ENCODE measurements at regions of chr5 and their contacts with region 1.

Region 1: GRCh38 chr5:73437101-73437776 is 11.3 kb downstream of the FOXD1 start:
- DNase-seq: no peak
- ATAC-seq: peak; percentile 8
- H3K4me3 ChIP-seq: no peak overlapping the region
- H3K4me3 Mint-ChIP-seq: peak overlapping the region in 7 of 10 donors; percentile 49 to 74 (median 66)
- H3K27ac ChIP-seq: no peak overlapping the region
- H3K27ac Mint-ChIP-seq: peak overlapping the region in 1 of 9 donors; percentile 46
- H3K4me1 ChIP-seq: peaks cover 0 to 3% of the 10 kb centered on the region in 2 donors
- H3K4me1 Mint-ChIP-seq: peaks cover 0 to 20% (median 6%) of the 10 kb centered on the region in 7 donors
- H3K27me3 ChIP-seq: peaks cover 35 to 50% of the 10 kb centered on the region in 2 donors
- H3K27me3 Mint-ChIP-seq: peaks cover 87 to 90% (median 89%) of the 10 kb centered on the region in 5 donors

Region 2: GRCh38 chr5:71564895-71565294 is 1872.3 kb before region 1 on chr5:
- CTCF ChIA-PET with region 1: no interaction called
- POLR2A ChIA-PET with region 1: no interaction called
- intact Hi-C with region 1: no loop called
- DNase-seq: no peak
- ATAC-seq: no peak
- H3K4me3 ChIP-seq: no peak overlapping the region
- H3K4me3 Mint-ChIP-seq: no peak overlapping the region
- H3K27ac ChIP-seq: no peak overlapping the region
- H3K27ac Mint-ChIP-seq: peak overlapping the region in 2 of 9 donors; percentile 12 to 40
- H3K4me1 ChIP-seq: no peaks in the 10 kb centered on the region
- H3K4me1 Mint-ChIP-seq: no peaks in the 10 kb centered on the region
- H3K27me3 ChIP-seq: no peaks in the 10 kb centered on the region
- H3K27me3 Mint-ChIP-seq: no peaks in the 10 kb centered on the region

Region 3: DNA sequence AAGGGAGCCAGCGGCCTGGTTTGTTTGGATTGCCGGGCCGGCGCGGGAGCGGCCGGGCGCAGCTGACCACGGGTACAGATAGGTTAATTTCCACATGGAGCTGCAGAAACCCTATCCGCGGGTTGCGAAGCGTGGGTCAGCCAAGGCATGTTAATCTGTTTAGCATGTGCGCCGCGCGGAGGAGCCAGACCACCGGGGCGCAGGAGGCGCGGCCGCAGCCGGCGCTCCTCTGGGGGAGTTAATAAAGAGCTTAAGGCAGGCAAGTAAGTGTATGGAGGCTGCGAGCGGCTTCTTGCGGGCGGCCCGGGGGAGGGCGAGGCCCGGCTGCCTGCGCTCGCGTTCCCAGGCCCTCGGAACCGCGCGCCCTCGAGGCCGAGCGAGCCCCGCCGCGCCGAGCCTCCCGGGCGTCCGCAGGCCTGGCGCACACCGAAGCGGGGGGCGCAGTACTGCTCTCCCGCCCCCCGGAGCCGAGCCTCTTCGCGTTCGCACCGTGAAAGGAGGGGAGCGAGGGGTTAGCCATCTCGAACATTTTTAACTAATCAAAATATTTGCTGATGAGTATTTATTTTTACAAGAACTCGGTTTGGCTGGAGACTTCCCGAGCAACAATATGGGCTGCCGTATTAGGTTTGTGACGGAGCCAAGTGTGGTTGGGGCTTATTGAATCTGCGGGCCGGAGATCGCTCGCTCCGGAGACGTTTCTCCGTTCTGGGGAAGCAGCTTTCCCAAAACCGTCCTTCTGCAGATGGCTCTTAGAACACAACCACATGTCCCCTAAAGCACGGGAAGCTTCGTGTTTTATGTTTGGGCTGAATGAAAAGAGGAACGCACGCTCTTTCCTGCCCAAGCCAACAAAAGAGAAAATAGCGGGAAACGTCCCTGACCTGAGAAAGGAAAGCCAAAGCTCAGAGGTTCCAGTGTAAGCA is 17.5 kb before region 1 on chr5:
- CTCF ChIA-PET with region 1: no interaction called
- POLR2A ChIA-PET with region 1: no interaction called
- intact Hi-C with region 1: loop called in 1 of 2 experiments (anchors 2 kb)
- DNase-seq: no peak
- ATAC-seq: no peak
- H3K4me3 ChIP-seq: no peak overlapping the region
- H3K4me3 Mint-ChIP-seq: peak overlapping the region in 9 of 10 donors; percentile 17 to 78 (median 46)
- H3K27ac ChIP-seq: no peak overlapping the region
- H3K27ac Mint-ChIP-seq: no peak overlapping the region
- H3K4me1 ChIP-seq: peaks cover 3 to 8% of the 10 kb centered on the region in 2 donors
- H3K4me1 Mint-ChIP-seq: peaks cover 3 to 18% (median 14%) of the 10 kb centered on the region in 7 donors
- H3K27me3 ChIP-seq: peaks cover 20 to 28% of the 10 kb centered on the region in 2 donors
- H3K27me3 Mint-ChIP-seq: peaks cover 82 to 94% (median 90%) of the 10 kb centered on the region in 5 donors

Region 4: GRCh38 chr5:74995926-74996325 is 1558.7 kb after region 1 on chr5:
- CTCF ChIA-PET with region 1: no interaction called
- POLR2A ChIA-PET with region 1: no interaction called
- intact Hi-C with region 1: no loop called
- DNase-seq: no peak
- ATAC-seq: no peak
- H3K4me3 ChIP-seq: no peak overlapping the region
- H3K4me3 Mint-ChIP-seq: no peak overlapping the region
- H3K27ac ChIP-seq: no peak overlapping the region
- H3K27ac Mint-ChIP-seq: no peak overlapping the region
- H3K4me1 ChIP-seq: no peaks in the 10 kb centered on the region
- H3K4me1 Mint-ChIP-seq: peaks cover 0 to 1% (median 0%) of the 10 kb centered on the region in 7 donors
- H3K27me3 ChIP-seq: no peaks in the 10 kb centered on the region
- H3K27me3 Mint-ChIP-seq: peaks cover 0 to 10% (median 0%) of the 10 kb centered on the region in 5 donors

Measured in naive thymus-derived CD4-positive, alpha-beta T cell (primary cell).